Activated CD4-positive, alpha-beta memory T cell treated with anti-CD3 and anti-CD28 coated beads for 36 hours (primary cell): ENCODE measurements at regions of chr15 and their contacts with region 1.

Region 1: GRCh38 chr15:43225201-43225949 is 4.6 kb upstream of the EPB42 start:
- DNase-seq: peak; percentile 50
- H3K4me3 Mint-ChIP-seq: no peak overlapping the region
- H3K27ac Mint-ChIP-seq: no peak overlapping the region
- H3K4me1 Mint-ChIP-seq: peaks cover 3% of the 10 kb centered on the region
- H3K27me3 Mint-ChIP-seq: peaks cover 2% of the 10 kb centered on the region

Region 2: DNA sequence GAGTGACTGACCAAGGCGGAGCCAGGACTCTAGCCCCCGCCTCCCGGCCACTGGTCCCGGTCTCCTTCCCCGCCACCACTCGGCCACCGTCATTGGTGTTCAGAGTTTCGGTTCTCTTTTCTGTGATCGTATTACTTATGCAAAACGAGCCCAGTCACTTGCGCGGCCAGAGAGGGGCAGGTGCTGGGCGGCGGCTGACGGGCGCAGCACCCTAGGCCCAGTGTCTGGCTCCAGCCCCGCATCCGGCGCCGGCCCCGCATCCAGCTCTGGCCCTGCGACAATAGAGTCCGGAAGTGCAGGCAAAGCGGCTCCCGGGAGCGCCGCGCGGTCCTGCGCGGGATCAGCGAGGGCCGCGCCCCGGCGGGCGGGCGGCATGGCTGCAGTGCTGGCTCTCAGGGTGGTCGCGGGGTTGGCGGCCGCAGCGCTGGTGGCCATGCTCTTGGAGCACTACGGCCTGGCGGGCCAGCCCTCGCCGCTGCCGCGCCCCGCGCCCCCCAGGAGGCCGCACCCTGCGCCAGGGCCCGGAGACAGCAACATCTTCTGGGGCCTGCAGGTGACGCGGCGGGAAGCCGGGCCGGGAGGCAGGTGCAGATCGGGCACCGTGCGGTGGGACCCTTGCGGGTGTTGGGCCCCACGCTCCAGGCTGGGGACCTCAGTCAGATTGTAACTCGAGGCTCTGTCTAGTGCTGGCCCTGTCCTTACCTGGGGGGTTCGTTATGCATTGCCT is 91.8 kb before region 1 on chr15 and contains the start of gene TMEM62:
- CTCF ChIA-PET with region 1: no interaction called
- POLR2A ChIA-PET with region 1: no interaction called
- intact Hi-C with region 1: no loop called
- DNase-seq: peak; percentile 83
- H3K4me3 Mint-ChIP-seq: peak within 1 kb of the TSS; percentile 84
- H3K27ac Mint-ChIP-seq: peak within 1 kb of the TSS; percentile 74
- H3K4me1 Mint-ChIP-seq: peaks cover 16% of the 10 kb centered on the region
- H3K27me3 Mint-ChIP-seq: peaks cover 4% of the 10 kb centered on the region
- total RNA-seq, gene TMEM62: 11.3 to 12.7 TPM

Region 3: GRCh38 chr15:43235536-43235935 is 10.2 kb after region 1 on chr15:
- CTCF ChIA-PET with region 1: interaction called, 12 read pairs
- POLR2A ChIA-PET with region 1: no interaction called
- intact Hi-C with region 1: no loop called
- DNase-seq: no peak
- H3K4me3 Mint-ChIP-seq: no peak overlapping the region
- H3K27ac Mint-ChIP-seq: no peak overlapping the region
- H3K4me1 Mint-ChIP-seq: peaks cover 4% of the 10 kb centered on the region
- H3K27me3 Mint-ChIP-seq: peaks cover 8% of the 10 kb centered on the region

Region 4: GRCh38 chr15:43249699-43250203 is 24.4 kb after region 1 on chr15:
- CTCF ChIA-PET with region 1: interaction called, 10 read pairs
- POLR2A ChIA-PET with region 1: interaction called, 7 read pairs
- intact Hi-C with region 1: no loop called
- DNase-seq: peak; percentile 41
- H3K4me3 Mint-ChIP-seq: no peak overlapping the region
- H3K27ac Mint-ChIP-seq: no peak overlapping the region
- H3K4me1 Mint-ChIP-seq: peaks cover 20% of the 10 kb centered on the region
- H3K27me3 Mint-ChIP-seq: peaks cover 8% of the 10 kb centered on the region

Region 5: GRCh38 chr15:43268111-43269105 is 43.0 kb after region 1 on chr15:
- CTCF ChIA-PET with region 1: interaction called, 22 read pairs
- POLR2A ChIA-PET with region 1: no interaction called
- intact Hi-C with region 1: no loop called
- DNase-seq: peak; percentile 32
- H3K4me3 Mint-ChIP-seq: no peak overlapping the region
- H3K27ac Mint-ChIP-seq: no peak overlapping the region
- H3K4me1 Mint-ChIP-seq: no peaks in the 10 kb centered on the region
- H3K27me3 Mint-ChIP-seq: peaks cover 7% of the 10 kb centered on the region

Region 6: GRCh38 chr15:43279491-43279890 is 54.1 kb after region 1 on chr15:
- CTCF ChIA-PET with region 1: interaction called, 260 read pairs
- POLR2A ChIA-PET with region 1: no interaction called
- intact Hi-C with region 1: no loop called
- DNase-seq: no peak
- H3K4me3 Mint-ChIP-seq: no peak overlapping the region
- H3K27ac Mint-ChIP-seq: no peak overlapping the region
- H3K4me1 Mint-ChIP-seq: peaks cover 2% of the 10 kb centered on the region
- H3K27me3 Mint-ChIP-seq: peaks cover 3% of the 10 kb centered on the region

Region 7: GRCh38 chr15:43285609-43286037 is 60.2 kb after region 1 on chr15:
- CTCF ChIA-PET with region 1: interaction called, 260 read pairs
- POLR2A ChIA-PET with region 1: interaction called, 3 read pairs
- intact Hi-C with region 1: loop called (anchors 1 kb)
- DNase-seq: peak; percentile 62
- H3K4me3 Mint-ChIP-seq: no peak overlapping the region
- H3K27ac Mint-ChIP-seq: no peak overlapping the region
- H3K4me1 Mint-ChIP-seq: peaks cover 2% of the 10 kb centered on the region
- H3K27me3 Mint-ChIP-seq: peaks cover 7% of the 10 kb centered on the region

Region 8: GRCh38 chr15:43469867-43470266 is 244.5 kb after region 1 on chr15:
- CTCF ChIA-PET with region 1: no interaction called
- POLR2A ChIA-PET with region 1: no interaction called
- intact Hi-C with region 1: no loop called
- DNase-seq: no peak
- H3K4me3 Mint-ChIP-seq: no peak overlapping the region
- H3K27ac Mint-ChIP-seq: peak overlapping the region; percentile 33
- H3K4me1 Mint-ChIP-seq: peaks cover 7% of the 10 kb centered on the region
- H3K27me3 Mint-ChIP-seq: no peaks in the 10 kb centered on the region